ENCODE measurements at regions of chr11 and their contacts with region 1.

Region 1: GRCh38 chr11:3217676-3218482 is 734 bp downstream of the MRGPRG start:
- DNase-seq: peak in 3 of 5 donors; percentile 7 to 30 (median 10)
- H3K4me3 ChIP-seq: no peak overlapping the region
- H3K27ac ChIP-seq: no peak overlapping the region
- H3K4me1 ChIP-seq: no peaks in the 10 kb centered on the region
- H3K27me3 ChIP-seq: no peaks in the 10 kb centered on the region
- CTCF ChIP-seq: no peak
- EP300 ChIP-seq: no peak
- POLR2A ChIP-seq: no peak

Region 2: GRCh38 chr11:2951231-2952110 is 266.4 kb before region 1 on chr11:
- intact Hi-C with region 1: no loop called
- DNase-seq: no peak
- H3K4me3 ChIP-seq: no peak overlapping the region
- H3K27ac ChIP-seq: no peak overlapping the region
- H3K4me1 ChIP-seq: no peaks in the 10 kb centered on the region
- H3K27me3 ChIP-seq: no peaks in the 10 kb centered on the region
- CTCF ChIP-seq: no peak
- EP300 ChIP-seq: no peak
- POLR2A ChIP-seq: no peak

Region 3: DNA sequence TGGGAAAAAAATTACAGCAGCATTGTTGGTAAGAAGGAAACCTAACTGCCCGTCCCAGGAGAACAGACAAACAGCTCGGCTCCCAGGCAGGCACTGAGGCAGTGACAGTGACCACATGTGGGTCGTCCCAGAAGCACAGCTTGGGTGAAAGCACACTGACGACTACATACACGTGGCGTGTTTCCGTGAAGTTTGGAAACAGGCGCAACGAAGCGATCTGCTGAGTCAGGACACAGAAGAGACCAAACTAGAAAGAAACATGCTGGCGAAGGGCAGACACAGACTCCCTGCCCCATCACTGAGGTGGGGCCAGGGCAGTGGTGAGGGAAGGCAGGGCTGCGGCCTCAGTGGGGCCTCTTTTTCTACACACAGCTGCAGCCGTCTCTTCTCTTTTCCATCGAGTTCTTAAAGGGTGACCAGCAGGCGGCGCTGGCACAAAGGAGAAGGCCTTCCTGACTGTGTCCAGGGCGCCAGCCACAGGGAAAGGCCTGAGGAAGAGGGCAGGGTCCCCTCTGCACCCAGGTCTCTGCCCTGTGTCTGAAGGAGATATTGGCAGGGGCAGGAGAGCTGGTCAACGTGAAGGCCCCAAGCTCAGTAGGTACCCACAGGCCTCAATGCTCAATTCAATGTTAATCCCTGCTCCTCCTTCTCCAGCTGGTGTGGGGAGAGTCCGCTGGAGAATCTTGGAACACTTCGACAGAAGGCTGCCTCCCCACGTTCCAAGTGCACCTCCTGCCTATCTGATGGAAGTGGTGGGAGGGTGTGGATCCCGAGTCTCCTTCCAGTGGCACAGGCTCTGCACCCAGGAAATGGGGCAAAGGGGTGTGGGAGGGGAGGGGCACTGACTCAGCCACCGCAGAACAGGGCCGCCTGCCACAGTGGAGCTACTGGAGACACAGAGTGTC is 180.6 kb before region 1 on chr11:
- intact Hi-C with region 1: loop called in 1 of 4 experiments (anchors 5 kb)
- DNase-seq: peak; percentile 60 to 86 (median 74)
- H3K4me3 ChIP-seq: no peak overlapping the region
- H3K27ac ChIP-seq: no peak overlapping the region
- H3K4me1 ChIP-seq: no peaks in the 10 kb centered on the region
- H3K27me3 ChIP-seq: no peaks in the 10 kb centered on the region
- CTCF ChIP-seq: peak; percentile 27 to 58 (median 44)
- EP300 ChIP-seq: no peak
- POLR2A ChIP-seq: no peak

Region 4: GRCh38 chr11:3109921-3110706 is 107.8 kb before region 1 on chr11:
- intact Hi-C with region 1: loop called in 1 of 4 experiments (anchors 10 kb)
- DNase-seq: peak in 4 of 5 donors; percentile 24 to 42 (median 26)
- H3K4me3 ChIP-seq: no peak overlapping the region
- H3K27ac ChIP-seq: no peak overlapping the region
- H3K4me1 ChIP-seq: no peaks in the 10 kb centered on the region
- H3K27me3 ChIP-seq: peaks cover 2% of the 10 kb centered on the region
- CTCF ChIP-seq: peak in 1 of 3 donors; percentile 17
- EP300 ChIP-seq: no peak
- POLR2A ChIP-seq: no peak